ENCODE measurements at regions of chr3 and their contacts with region 1.

Region 1: DNA sequence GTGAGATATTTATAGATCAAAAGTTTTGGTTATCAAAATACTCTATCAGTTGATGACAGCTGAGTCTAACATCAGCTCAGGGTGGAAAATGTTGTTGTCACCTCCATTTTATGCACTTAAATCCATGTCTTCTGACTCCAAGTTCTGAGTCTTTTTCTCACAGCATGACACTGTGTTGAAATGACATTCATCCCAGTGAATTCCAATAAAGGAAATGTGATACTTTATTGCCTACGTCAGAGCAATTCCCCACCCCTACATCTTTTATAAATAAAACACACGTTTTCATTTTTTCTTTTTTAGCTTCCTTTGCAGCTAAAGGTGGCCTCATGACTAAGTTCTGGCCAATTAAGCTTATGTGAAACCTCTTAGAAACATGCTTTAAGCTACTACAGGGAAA is 10.7 kb downstream of the DRD3 start:
- DNase-seq: no peak
- H3K4me3 ChIP-seq: no peak overlapping the region
- H3K27ac ChIP-seq: no peak overlapping the region
- H3K4me1 ChIP-seq: no peaks in the 10 kb centered on the region
- H3K27me3 ChIP-seq: no peaks in the 10 kb centered on the region; the same call in 1 of the 2 replicates
- CTCF ChIP-seq: no peak
- EP300 ChIP-seq: no peak
- RAD21 ChIP-seq: no peak

Region 2: GRCh38 chr3:114152519-114153151 is 15.5 kb before region 1 on chr3:
- CTCF ChIA-PET with region 1: interaction called, 14 read pairs
- POLR2A ChIA-PET with region 1: no interaction called
- DNase-seq: peak; percentile 87
- H3K4me3 ChIP-seq: peak overlapping the region; percentile 53 to 64
- H3K27ac ChIP-seq: peak overlapping the region in 1 of 2 experiments; percentile 45; a peak in 1 of 4 replicates
- H3K4me1 ChIP-seq: peaks cover 0 to 5% of the 10 kb centered on the region in 2 experiments; a peak in 1 of 4 replicates
- H3K27me3 ChIP-seq: no peaks in the 10 kb centered on the region
- CTCF ChIP-seq: peak; percentile 97
- EP300 ChIP-seq: 0 out of 4 replicates have a peak, but pooled peaks of 1 of the 2 experiments have one; percentile 31
- RAD21 ChIP-seq: peak; percentile 87

Region 3: GRCh38 chr3:114194750-114195149 is 26.6 kb after region 1 on chr3:
- CTCF ChIA-PET with region 1: no interaction called
- POLR2A ChIA-PET with region 1: no interaction called
- DNase-seq: no peak
- H3K4me3 ChIP-seq: no peak overlapping the region
- H3K27ac ChIP-seq: no peak overlapping the region
- H3K4me1 ChIP-seq: no peaks in the 10 kb centered on the region
- H3K27me3 ChIP-seq: no peaks in the 10 kb centered on the region; the same call in 1 of the 2 replicates
- CTCF ChIP-seq: no peak
- EP300 ChIP-seq: no peak
- RAD21 ChIP-seq: no peak

Measured in SK-N-SH (cell line).